Heart left ventricle (tissue), 16 donors: ENCODE measurements at regions of chr14 and their contacts with region 1.

Region 1: GRCh38 chr14:101774006-101774795 is 12.7 kb downstream of the PPP2R5C start:
- DNase-seq: no peak
- ATAC-seq: no peak
- H3K4me3 ChIP-seq: no peak overlapping the region
- H3K27ac ChIP-seq: peak overlapping the region in 3 of 12 donors; percentile 28 to 41 (median 33)
- H3K4me1 ChIP-seq: peaks cover 0 to 46% (median 10%) of the 10 kb centered on the region in 12 donors
- H3K27me3 ChIP-seq: no peaks in the 10 kb centered on the region
- CTCF ChIP-seq: no peak
- POLR2A ChIP-seq: no peak

Region 2: GRCh38 chr14:101823511-101824120 is 49.4 kb after region 1 on chr14:
- intact Hi-C with region 1: loop called in 1 of 10 experiments (anchors 10 kb)
- DNase-seq: peak in 1 of 5 donors; percentile 72
- ATAC-seq: peak; percentile 36 to 90 (median 66)
- H3K4me3 ChIP-seq: peak overlapping the region in 9 of 12 donors; percentile 3 to 50 (median 18)
- H3K27ac ChIP-seq: peak overlapping the region; percentile 46 to 97 (median 76)
- H3K4me1 ChIP-seq: peaks cover 0 to 94% (median 41%) of the 10 kb centered on the region in 12 donors
- H3K27me3 ChIP-seq: no peaks in the 10 kb centered on the region
- CTCF ChIP-seq: no peak
- POLR2A ChIP-seq: no peak

Region 3: GRCh38 chr14:101889898-101890297 is 115.7 kb after region 1 on chr14:
- intact Hi-C with region 1: loop called in 6 of 10 experiments (anchors 5 to 10 kb)
- DNase-seq: no peak
- ATAC-seq: no peak
- H3K4me3 ChIP-seq: no peak overlapping the region
- H3K27ac ChIP-seq: no peak overlapping the region
- H3K4me1 ChIP-seq: peaks cover 0 to 4% (median 0%) of the 10 kb centered on the region in 12 donors
- H3K27me3 ChIP-seq: no peaks in the 10 kb centered on the region
- CTCF ChIP-seq: peak in 3 of 12 donors; percentile 9 to 43 (median 24)
- POLR2A ChIP-seq: no peak

Region 4: GRCh38 chr14:101947906-101948665 is 173.9 kb after region 1 on chr14:
- intact Hi-C with region 1: loop called in 2 of 10 experiments (anchors 5 to 10 kb)
- DNase-seq: peak; percentile 100
- ATAC-seq: peak; percentile 98 to 99 (median 99)
- H3K4me3 ChIP-seq: peak overlapping the region; percentile 62 to 91 (median 74)
- H3K27ac ChIP-seq: peak overlapping the region; percentile 89 to 100 (median 97)
- H3K4me1 ChIP-seq: peaks cover 0 to 25% (median 13%) of the 10 kb centered on the region in 12 donors
- H3K27me3 ChIP-seq: no peaks in the 10 kb centered on the region
- CTCF ChIP-seq: no peak
- POLR2A ChIP-seq: peak; percentile 81 to 94